A673 (cell line): ENCODE measurements at regions of chr17 and their contacts with region 1.

Region 1: DNA sequence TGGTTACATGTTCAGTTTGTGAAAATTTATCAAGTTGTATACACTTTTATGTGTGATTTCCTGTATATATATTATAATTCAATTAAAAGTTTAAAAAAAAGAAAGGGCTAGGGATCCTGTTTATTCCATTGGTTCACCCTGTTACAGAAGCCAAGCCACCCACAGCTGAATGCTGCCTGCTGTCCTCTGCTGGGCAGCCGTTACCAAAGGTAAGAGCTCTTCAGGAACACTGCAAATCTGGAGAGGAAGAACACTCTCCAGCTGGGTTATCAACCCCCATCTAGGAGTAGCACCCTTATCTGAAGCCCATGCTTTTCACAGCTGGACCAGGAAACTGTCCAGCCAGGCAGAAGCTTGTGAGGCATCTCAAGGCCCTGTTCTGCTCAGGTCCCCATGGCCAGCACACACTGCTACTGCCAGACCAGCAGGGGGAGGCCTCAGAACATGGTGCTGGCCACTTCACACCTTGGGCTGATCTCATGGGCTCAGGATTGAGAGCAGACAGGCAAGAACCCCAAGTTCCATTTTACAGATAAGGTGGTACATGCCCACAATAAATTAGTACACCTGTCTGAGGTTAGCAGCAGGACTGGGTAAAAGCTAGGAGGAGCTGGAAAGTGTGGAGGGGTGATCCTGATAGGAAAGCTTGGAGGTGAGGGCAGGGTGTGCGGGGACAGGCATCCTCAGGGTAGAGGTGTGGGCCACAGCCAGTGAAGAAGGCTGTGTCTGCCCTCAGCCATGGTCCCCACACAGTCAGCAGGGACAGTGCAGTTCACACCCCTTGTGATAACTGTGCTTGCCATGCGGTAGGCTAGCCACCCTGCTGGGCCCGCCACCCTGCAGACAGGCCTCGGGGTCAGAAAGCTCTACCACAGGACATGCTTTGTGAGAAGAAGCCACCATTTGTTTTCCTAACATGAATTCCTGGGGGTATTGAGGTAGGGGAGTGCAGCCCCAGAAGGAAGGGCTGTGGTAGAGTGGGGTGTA is 54.3 kb upstream of the SREBF1 start:
- DNase-seq: peak; percentile 59
- H3K4me3 ChIP-seq: no peak overlapping the region
- H3K27ac ChIP-seq: no peak overlapping the region
- H3K4me1 ChIP-seq: peaks cover 5% of the 10 kb centered on the region
- H3K27me3 ChIP-seq: no peaks in the 10 kb centered on the region
- CTCF ChIP-seq: peak; percentile 71

Region 2: GRCh38 chr17:17868641-17869522 is 22.2 kb before region 1 on chr17:
- CTCF ChIA-PET with region 1: interaction called, 12 read pairs
- POLR2A ChIA-PET with region 1: no interaction called
- intact Hi-C with region 1: no loop called
- DNase-seq: peak; percentile 64
- H3K4me3 ChIP-seq: no peak overlapping the region
- H3K27ac ChIP-seq: peak overlapping the region; percentile 58
- H3K4me1 ChIP-seq: peaks cover 22% of the 10 kb centered on the region
- H3K27me3 ChIP-seq: no peaks in the 10 kb centered on the region
- CTCF ChIP-seq: no peak

Region 3: GRCh38 chr17:17919169-17920107 is 28.4 kb after region 1 on chr17:
- CTCF ChIA-PET with region 1: interaction called, 15 read pairs
- POLR2A ChIA-PET with region 1: no interaction called
- intact Hi-C with region 1: no loop called
- DNase-seq: peak; percentile 91
- H3K4me3 ChIP-seq: no peak overlapping the region
- H3K27ac ChIP-seq: peak overlapping the region; percentile 14
- H3K4me1 ChIP-seq: peaks cover 33% of the 10 kb centered on the region
- H3K27me3 ChIP-seq: no peaks in the 10 kb centered on the region
- CTCF ChIP-seq: peak; percentile 95